Left ventricle myocardium inferior (tissue), 1 donor: ENCODE measurements at regions of chr13 and their contacts with region 1.

Region 1: DNA sequence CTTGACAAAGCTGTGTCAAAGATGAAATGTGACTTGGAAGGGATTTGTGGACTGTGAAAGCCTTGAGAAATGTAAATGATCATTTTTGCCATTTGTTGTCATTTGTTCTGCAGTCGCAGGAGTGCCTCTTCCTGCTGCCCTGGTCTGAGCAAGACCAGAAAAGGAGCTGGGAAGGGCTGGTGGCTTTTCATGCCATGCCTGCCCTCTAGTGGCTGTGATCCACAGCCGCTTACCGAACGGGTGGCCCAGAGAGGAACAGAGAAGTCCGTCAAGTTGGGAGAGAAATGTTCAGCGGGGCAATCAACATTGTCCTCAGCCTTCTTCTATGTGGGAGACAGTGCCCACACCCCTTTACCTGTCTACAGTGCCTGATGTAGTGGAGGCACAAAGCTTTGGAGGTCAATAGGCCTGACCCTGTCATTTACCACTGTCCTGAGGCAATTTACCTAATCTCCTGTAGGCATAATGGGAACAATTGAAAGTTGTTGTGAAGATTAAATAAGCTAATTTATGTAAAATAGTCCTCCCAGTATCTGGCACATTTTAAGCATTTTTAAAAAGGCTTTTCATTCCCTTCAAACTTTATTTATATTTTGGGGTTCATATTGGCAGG is 224.4 kb downstream of the B3GLCT start:
- DNase-seq: peak; percentile 69
- H3K4me3 ChIP-seq: no peak overlapping the region
- H3K27ac ChIP-seq: no peak overlapping the region
- H3K4me1 ChIP-seq: no peaks in the 10 kb centered on the region
- H3K27me3 ChIP-seq: no peaks in the 10 kb centered on the region
- CTCF ChIP-seq: peak; percentile 92

Region 2: DNA sequence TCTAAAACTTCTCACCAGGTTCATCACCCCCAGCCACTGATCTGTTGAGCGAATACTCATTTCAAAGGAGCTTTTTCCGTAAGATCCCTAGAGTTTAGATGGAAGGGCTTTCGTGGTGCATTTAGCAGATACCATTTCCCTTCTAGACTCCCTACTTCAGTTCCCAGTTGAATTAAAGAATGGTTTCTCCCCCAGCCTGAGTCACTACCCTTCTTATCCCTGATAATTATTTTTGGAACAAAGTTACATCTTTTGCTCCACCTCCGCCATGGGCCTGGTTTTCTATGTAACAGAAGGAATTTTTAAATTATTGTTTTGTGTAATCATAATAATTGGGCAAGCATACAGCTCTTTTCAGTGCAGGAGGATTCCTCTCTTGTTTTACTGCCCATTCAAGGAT is 784.6 kb before region 1 on chr13:
- intact Hi-C with region 1: no loop called
- DNase-seq: no peak
- H3K4me3 ChIP-seq: no peak overlapping the region
- H3K27ac ChIP-seq: no peak overlapping the region
- H3K4me1 ChIP-seq: peaks cover 26% of the 10 kb centered on the region
- H3K27me3 ChIP-seq: no peaks in the 10 kb centered on the region
- CTCF ChIP-seq: no peak

Region 3: GRCh38 chr13:31234729-31235128 is 189.5 kb before region 1 on chr13:
- intact Hi-C with region 1: loop called (anchors 5 kb)
- DNase-seq: no peak
- H3K4me3 ChIP-seq: no peak overlapping the region
- H3K27ac ChIP-seq: no peak overlapping the region
- H3K4me1 ChIP-seq: no peaks in the 10 kb centered on the region
- H3K27me3 ChIP-seq: no peaks in the 10 kb centered on the region
- CTCF ChIP-seq: peak; percentile 50

Region 4: DNA sequence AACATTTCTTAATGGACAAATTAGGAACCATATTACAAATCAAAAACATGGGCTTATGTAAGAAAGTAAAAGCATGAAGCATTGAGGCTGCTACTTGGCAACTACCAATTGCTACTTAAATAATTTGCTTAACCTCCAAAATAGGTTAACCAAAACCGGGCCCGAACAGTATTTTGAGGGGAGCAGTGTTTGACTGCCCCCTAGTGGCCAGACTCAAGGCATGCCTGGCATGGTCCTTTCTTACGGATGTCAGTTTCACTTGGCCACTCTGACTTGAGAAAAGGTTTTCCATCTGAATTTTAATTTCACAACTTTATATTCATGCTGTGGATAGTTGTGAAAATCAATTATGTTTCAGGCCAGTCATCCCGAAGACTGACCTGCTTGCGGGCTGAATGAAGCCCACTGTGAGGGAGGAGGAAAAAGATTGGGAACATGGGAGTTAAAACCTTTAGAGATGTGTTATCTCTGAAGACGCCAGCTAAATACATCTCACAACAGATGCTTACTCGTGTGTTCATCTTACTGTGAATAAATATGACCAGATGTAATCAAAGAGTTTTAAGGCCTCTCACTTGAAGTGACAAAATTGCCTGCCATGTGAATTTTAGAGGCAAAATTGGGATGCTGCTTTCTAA is 318.0 kb after region 1 on chr13:
- intact Hi-C with region 1: loop called (anchors 5 kb)
- DNase-seq: peak; percentile 45
- H3K4me3 ChIP-seq: no peak overlapping the region
- H3K27ac ChIP-seq: no peak overlapping the region
- H3K4me1 ChIP-seq: no peaks in the 10 kb centered on the region
- H3K27me3 ChIP-seq: peaks cover 23% of the 10 kb centered on the region
- CTCF ChIP-seq: peak; percentile 99